BJ (cell line): ENCODE measurements at regions of chr1 and their contacts with region 1.

Region 1: GRCh38 chr1:89762779-89763648 is 57.8 kb upstream of the LRRC8D start:
- DNase-seq: peak; percentile 20
- H3K4me3 ChIP-seq: peak overlapping the region; percentile 51
- H3K27me3 ChIP-seq: no peaks in the 10 kb centered on the region
- CTCF ChIP-seq: peak; percentile 100

Region 2: DNA sequence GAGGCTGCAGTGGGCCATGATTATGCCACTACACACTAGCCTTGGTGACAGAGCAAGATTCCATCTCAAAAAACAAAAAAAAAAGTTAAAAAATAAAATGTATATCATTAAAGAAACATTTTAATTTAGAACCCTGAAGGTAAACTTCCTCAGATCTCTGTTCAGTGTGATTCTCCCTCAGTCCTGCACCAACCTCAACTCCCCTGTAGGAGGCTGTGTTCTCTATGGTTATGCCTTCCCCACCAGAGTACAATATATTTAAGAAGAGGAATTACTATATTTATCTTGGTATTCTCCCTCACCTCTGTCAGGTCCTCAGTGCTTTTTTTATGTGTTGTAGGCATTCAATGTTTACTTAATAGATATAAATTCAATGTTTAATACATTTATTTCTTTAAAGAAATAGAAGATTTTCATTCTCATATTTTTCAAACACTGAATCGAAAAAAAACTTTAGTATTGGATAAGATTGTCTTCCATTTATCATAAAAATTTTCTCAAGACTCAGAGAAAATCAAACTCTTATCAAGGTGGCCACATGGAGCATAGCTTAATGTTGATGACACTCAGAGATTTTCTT is 243.1 kb before region 1 on chr1:
- CTCF ChIA-PET with region 1: interaction called, 13 read pairs
- POLR2A ChIA-PET with region 1: no interaction called
- DNase-seq: no peak
- H3K4me3 ChIP-seq: no peak overlapping the region
- H3K27me3 ChIP-seq: peaks cover 4% of the 10 kb centered on the region
- CTCF ChIP-seq: peak; percentile 57

Region 3: GRCh38 chr1:89615676-89616598 is 147.1 kb before region 1 on chr1:
- CTCF ChIA-PET with region 1: interaction called, 27 read pairs
- POLR2A ChIA-PET with region 1: no interaction called
- DNase-seq: no peak
- H3K4me3 ChIP-seq: no peak overlapping the region
- H3K27me3 ChIP-seq: no peaks in the 10 kb centered on the region
- CTCF ChIP-seq: peak; percentile 44

Region 4: GRCh38 chr1:89632657-89633247 is 130.3 kb before region 1 on chr1 and contains the start of gene LRRC8C:
- CTCF ChIA-PET with region 1: interaction called, 85 read pairs
- POLR2A ChIA-PET with region 1: interaction called, 3 read pairs
- DNase-seq: no peak
- H3K4me3 ChIP-seq: peak within 1 kb of the TSS; percentile 96
- H3K27me3 ChIP-seq: no peaks in the 10 kb centered on the region
- CTCF ChIP-seq: no peak
- polyA plus RNA-seq, gene LRRC8C: 3.6 and 5.7 TPM in 2 replicates

Region 5: DNA sequence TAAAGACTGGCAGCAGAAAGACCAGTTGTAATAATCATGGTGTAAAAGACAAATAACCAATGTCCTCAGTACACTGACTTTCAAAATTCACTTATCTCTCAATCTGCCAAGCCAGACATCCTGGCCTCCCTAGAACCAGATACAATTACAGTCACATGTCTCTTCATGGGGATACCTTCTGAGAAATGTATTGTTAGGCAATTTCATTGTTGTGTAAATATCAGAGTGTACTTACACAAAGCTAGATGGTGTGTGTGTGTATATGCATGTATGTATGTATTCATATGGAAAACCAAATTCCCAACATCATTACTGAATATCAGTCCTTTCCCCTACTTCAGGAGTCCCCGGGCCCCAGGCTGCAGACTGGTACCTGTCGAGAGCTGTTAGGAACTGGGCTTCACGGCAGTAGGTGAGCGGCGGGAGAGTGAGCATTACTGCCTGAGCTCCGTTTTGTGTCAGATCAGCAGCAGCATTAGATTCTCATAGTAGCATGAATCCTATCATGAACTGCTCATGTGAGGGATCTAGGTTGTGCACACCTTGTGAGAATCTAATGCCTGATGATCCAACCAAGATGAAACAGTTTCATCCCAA is 166.6 kb after region 1 on chr1:
- CTCF ChIA-PET with region 1: no interaction called
- POLR2A ChIA-PET with region 1: no interaction called
- DNase-seq: no peak
- H3K4me3 ChIP-seq: no peak overlapping the region
- H3K27me3 ChIP-seq: no peaks in the 10 kb centered on the region
- CTCF ChIP-seq: no peak